CD14-positive monocyte (primary cell): ENCODE measurements at regions of chr2 and their contacts with region 1.

Region 1: GRCh38 chr2:101704046-101704466 is 6.5 kb downstream of the MAP4K4 start:
- DNase-seq: no peak
- H3K4me3 ChIP-seq: no peak overlapping the region
- H3K4me3 Mint-ChIP-seq: no peak overlapping the region
- H3K27ac ChIP-seq: no peak overlapping the region
- H3K27ac Mint-ChIP-seq: peak overlapping the region in 3 of 7 donors; percentile 57 to 75 (median 59)
- H3K4me1 ChIP-seq: peaks cover 65 to 78% of the 10 kb centered on the region in 2 donors
- H3K4me1 Mint-ChIP-seq: peaks cover 47% of the 10 kb centered on the region
- H3K27me3 ChIP-seq: no peaks in the 10 kb centered on the region
- H3K27me3 Mint-ChIP-seq: no peaks in the 10 kb centered on the region
- CTCF ChIP-seq: no peak

Region 2: GRCh38 chr2:101736861-101737291 is 32.8 kb after region 1 on chr2:
- intact Hi-C with region 1: loop called (anchors 5 kb)
- DNase-seq: peak; percentile 73 to 94 (median 93)
- H3K4me3 ChIP-seq: peak overlapping the region in 1 of 3 experiments; percentile 27
- H3K4me3 Mint-ChIP-seq: peak overlapping the region in 1 of 2 donors; percentile 75
- H3K27ac ChIP-seq: peak overlapping the region in 1 of 2 donors; percentile 77
- H3K27ac Mint-ChIP-seq: peak overlapping the region; percentile 71 to 93 (median 90)
- H3K4me1 ChIP-seq: peaks cover 82 to 89% of the 10 kb centered on the region in 2 donors
- H3K4me1 Mint-ChIP-seq: peaks cover 86% of the 10 kb centered on the region
- H3K27me3 ChIP-seq: no peaks in the 10 kb centered on the region
- H3K27me3 Mint-ChIP-seq: no peaks in the 10 kb centered on the region
- CTCF ChIP-seq: no peak